Mammary epithelial cell (primary cell): ENCODE measurements at regions of chr11 and their contacts with region 1.

Region 1: DNA sequence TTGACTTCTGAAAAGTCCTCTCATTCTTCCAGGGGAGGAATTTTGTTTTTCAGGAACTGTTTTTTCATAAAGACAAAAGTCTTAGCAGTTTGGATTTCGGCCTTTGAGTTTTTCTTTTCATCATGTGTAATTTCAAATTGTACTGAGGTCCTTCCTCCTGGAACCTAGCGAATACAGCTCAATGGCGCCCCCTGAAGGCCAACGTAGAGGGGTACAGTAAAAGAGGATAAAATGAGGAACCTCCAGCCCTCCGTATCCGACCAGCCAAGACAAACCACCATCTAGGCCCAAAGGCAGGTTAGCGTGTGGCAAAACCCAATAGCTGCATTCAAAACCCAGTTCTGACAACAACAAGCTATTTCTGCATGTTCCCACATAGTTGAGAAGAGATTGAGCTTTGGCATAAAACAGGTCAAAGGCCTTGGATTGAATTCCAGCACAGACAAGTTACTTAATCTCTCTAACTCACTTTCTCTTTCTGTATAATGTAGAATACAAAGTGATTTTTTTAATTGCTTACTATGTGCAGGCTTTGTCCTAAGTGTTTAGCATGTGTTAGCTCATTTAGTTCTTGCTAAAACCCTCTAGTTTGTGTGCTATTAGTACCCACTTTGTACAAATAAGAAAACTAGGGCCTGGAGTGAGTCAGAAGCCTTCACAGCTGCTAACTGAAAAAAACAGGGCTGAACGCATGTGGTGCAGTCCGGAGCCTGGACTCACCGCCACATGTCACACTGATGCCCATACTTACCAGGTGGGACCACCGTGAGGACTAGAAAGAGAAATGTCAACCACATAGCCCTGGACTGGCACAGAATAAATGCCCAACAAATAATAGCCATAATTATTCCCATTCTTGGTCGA is 43.2 kb upstream of the ETS1 start:
- DNase-seq: peak; percentile 60
- H3K4me3 ChIP-seq: no peak overlapping the region
- H3K27ac ChIP-seq: no peak overlapping the region
- H3K4me1 ChIP-seq: no peaks in the 10 kb centered on the region
- H3K27me3 ChIP-seq: no peaks in the 10 kb centered on the region
- CTCF ChIP-seq: peak; percentile 80 to 85

Region 2: DNA sequence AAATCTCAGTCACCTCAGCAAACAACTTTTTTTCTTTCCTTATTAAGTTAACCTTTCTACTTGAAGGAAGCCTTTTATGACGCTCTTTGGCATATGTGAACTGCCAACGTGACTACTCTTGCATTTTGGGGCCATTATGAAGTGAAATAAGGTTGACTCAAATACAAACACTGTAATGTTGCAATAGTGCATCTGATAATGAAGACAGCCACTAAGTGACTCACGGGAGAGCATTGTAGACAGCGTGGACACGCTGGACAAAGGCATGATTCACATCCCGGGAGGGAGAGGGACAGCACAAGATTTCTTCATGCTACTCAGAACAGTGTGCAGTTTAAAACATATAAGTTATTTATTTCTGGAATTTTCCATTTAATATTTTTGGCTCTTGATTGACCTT is 604.0 kb before region 1 on chr11:
- CTCF ChIA-PET with region 1: interaction called, 3 read pairs
- dilution Hi-C with region 1: loop called (anchors 25 kb)
- in situ Hi-C with region 1: loop called (anchors 25 kb)
- intact Hi-C with region 1: loop called (anchors 1 kb)
- DNase-seq: peak; percentile 99
- H3K4me3 ChIP-seq: no peak overlapping the region
- H3K27ac ChIP-seq: peak overlapping the region; percentile 87
- H3K4me1 ChIP-seq: peaks cover 31% of the 10 kb centered on the region
- H3K27me3 ChIP-seq: no peaks in the 10 kb centered on the region
- CTCF ChIP-seq: no peak

Region 3: GRCh38 chr11:128164080-128164741 is 466.4 kb before region 1 on chr11:
- CTCF ChIA-PET with region 1: no interaction called
- dilution Hi-C with region 1: no loop called
- in situ Hi-C with region 1: loop called in 1 of 2 experiments (anchors 10 kb)
- intact Hi-C with region 1: no loop called
- DNase-seq: no peak
- H3K4me3 ChIP-seq: no peak overlapping the region
- H3K27ac ChIP-seq: no peak overlapping the region
- H3K4me1 ChIP-seq: no peaks in the 10 kb centered on the region
- H3K27me3 ChIP-seq: no peaks in the 10 kb centered on the region
- CTCF ChIP-seq: no peak

Region 4: DNA sequence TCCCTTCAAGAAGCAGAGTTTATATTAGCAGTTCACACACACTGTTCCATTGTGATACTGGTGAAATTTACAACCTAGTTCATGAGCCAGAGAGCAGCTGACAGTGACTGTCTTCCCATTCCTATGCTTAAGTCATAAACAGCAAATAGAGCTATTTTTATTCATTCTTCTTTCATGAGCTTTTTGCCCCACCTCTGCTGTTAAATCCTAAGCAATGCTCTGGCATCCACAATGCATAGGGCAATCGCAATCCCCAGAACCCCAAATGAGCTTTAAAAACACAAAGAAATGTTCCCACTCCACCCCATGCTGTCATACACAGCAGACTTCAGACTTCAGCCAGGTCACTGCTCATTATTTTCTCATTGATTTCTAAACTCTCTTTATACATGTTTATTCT is 350.7 kb before region 1 on chr11:
- CTCF ChIA-PET with region 1: no interaction called
- dilution Hi-C with region 1: no loop called
- in situ Hi-C with region 1: loop called (anchors 5 to 10 kb)
- intact Hi-C with region 1: no loop called
- DNase-seq: peak; percentile 26
- H3K4me3 ChIP-seq: no peak overlapping the region
- H3K27ac ChIP-seq: peak overlapping the region; percentile 59
- H3K4me1 ChIP-seq: peaks cover 9% of the 10 kb centered on the region
- H3K27me3 ChIP-seq: no peaks in the 10 kb centered on the region
- CTCF ChIP-seq: no peak

Region 5: DNA sequence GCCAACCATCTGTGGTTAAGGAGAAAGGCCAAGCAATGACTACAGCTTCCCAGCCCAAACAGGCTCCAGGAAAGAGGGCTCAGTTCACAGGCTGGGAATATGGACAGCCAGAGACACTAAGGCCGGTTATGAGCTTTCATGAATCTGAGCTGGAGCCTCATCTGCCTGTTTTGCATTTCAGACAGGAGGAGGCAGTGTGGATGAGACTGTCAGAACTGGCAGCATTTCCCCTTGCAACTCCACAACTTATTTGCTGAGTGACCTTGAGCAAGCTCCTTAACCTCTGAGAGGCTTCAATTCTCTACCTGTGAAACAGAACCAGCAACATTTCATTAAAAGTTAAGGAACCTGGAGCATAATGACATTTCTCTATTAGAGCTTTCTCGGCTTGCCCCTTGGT is 307.2 kb before region 1 on chr11:
- CTCF ChIA-PET with region 1: no interaction called
- dilution Hi-C with region 1: loop called (anchors 25 kb)
- in situ Hi-C with region 1: no loop called
- intact Hi-C with region 1: no loop called
- DNase-seq: no peak
- H3K4me3 ChIP-seq: no peak overlapping the region
- H3K27ac ChIP-seq: no peak overlapping the region
- H3K4me1 ChIP-seq: no peaks in the 10 kb centered on the region
- H3K27me3 ChIP-seq: peaks cover 3% of the 10 kb centered on the region
- CTCF ChIP-seq: peak; percentile 10 to 37

Region 6: DNA sequence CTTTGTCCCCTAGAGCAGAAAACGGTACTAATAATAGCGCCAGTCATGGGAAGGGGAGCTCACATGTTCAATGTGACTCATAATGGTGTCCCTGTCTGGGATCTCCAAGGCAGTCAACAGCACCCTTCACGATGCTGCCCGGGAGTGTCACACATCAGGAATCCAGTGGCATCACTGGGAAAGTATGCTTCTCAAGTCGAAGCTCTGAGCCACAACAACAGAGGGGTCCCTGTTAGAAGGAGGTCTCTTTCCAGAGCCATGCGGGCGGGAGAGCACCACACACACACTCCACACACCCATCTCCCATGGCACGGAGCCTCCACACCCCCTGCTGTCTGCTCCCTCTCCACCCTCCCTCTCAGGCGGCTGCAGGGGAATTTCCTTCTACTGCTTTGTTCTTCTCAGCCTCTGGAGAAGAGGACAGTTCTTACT is 163.0 kb before region 1 on chr11:
- CTCF ChIA-PET with region 1: no interaction called
- dilution Hi-C with region 1: no loop called
- in situ Hi-C with region 1: no loop called
- intact Hi-C with region 1: loop called (anchors 5 kb)
- DNase-seq: peak; percentile 93
- H3K4me3 ChIP-seq: no peak overlapping the region
- H3K27ac ChIP-seq: peak overlapping the region; percentile 59
- H3K4me1 ChIP-seq: peaks cover 26% of the 10 kb centered on the region
- H3K27me3 ChIP-seq: no peaks in the 10 kb centered on the region
- CTCF ChIP-seq: peak in 1 of 2 donors; percentile 30

Region 7: DNA sequence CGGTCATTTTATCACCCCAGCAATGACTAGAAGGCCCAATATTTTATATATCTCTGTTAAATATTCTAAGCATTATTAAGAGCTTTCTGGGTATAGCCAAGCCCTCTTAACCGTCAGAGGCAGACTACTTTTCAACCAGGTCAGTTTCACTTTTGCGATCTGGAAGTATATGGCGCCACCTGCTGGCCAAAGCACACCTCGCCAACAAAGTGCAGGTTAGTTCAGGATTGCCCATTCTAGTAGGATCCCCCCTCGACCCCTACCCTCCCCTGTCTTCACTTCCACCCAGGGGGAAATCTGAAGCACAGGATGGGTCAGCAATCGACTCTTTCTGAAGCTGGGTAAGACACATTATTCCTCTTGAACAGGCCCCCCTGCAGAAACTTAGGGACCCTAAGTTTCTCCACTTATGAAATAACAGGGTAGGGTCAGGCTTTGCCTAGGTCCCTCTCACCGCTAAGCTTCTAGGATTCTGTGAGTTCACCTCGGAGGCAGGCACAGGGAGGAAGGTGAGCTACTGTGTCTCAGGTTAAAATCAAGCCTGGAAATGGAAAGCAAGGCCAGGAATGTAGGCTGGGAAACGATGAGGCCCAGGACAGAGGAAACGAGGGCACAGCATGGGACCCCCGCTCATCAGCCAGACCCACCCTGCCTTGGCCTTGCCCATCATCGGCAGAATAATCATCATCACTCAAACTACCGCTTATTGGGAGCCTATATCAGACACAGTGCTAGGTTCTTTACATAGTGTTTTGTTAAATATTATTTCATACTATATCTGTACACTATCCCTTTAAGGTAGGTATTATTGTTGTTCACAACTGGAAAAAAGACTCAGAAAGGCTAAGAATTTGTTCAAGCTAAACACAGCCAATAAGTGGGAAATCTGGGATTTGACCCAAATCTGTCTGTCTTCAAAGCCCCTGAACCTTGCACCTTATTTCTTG is 200.8 kb after region 1 on chr11:
- CTCF ChIA-PET with region 1: interaction called, 4 read pairs
- dilution Hi-C with region 1: loop called (anchors 10 kb)
- in situ Hi-C with region 1: no loop called
- intact Hi-C with region 1: loop called (anchors 1 kb)
- DNase-seq: peak; percentile 58
- H3K4me3 ChIP-seq: no peak overlapping the region
- H3K27ac ChIP-seq: peak overlapping the region; percentile 26
- H3K4me1 ChIP-seq: peaks cover 6% of the 10 kb centered on the region
- H3K27me3 ChIP-seq: no peaks in the 10 kb centered on the region
- CTCF ChIP-seq: peak; percentile 76 to 85